Breast epithelium (tissue), 4 donors: ENCODE measurements at regions of chr2 and their contacts with region 1.

Region 1: DNA sequence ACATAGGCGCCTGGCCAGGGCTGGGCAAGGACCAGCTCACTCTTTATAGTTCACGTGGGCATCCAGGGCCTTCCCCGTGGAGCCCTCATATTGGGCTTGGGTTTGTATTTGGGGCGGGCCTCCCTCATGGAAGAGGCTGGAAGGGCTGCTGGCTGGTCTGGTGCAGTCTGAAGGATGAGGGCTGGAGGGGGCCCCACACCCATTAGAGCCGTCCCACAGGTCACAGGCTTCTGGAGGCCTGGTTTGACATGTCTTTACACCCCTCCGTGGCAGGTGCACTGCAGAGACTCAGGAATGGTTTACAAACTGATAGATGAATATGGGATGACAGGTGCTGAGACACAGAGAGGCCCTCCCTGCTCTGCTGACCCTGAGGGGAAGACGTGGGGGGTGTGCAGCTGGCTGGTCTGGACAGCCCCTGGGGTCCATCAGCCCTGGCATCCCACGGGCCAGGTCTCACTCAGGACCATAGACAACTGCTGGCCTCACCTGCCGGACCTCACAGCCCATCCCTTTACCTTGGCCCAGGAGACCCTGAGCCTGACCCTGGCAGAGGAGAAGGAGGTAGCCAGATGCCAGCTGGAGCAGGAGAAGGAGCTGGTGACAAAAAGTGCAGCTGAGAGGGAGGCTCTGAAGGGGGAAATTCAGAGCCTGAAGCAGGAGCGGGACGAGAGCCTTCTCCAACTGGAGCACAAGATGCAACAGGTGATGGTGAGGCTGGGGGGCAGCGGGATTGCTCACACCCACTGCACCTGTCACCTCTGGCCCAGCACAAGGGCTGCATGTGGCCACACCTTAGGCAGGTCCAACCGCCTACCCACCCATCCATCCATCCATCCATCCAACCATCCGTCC is 43.9 kb downstream of the CROCC2 start:
- DNase-seq: peak in 1 of 2 donors; percentile 36
- H3K4me3 ChIP-seq: no peak overlapping the region
- H3K27ac ChIP-seq: no peak overlapping the region
- H3K4me1 ChIP-seq: no peaks in the 10 kb centered on the region
- H3K27me3 ChIP-seq: no peaks in the 10 kb centered on the region
- CTCF ChIP-seq: no peak
- POLR2A ChIP-seq: no peak

Region 2: DNA sequence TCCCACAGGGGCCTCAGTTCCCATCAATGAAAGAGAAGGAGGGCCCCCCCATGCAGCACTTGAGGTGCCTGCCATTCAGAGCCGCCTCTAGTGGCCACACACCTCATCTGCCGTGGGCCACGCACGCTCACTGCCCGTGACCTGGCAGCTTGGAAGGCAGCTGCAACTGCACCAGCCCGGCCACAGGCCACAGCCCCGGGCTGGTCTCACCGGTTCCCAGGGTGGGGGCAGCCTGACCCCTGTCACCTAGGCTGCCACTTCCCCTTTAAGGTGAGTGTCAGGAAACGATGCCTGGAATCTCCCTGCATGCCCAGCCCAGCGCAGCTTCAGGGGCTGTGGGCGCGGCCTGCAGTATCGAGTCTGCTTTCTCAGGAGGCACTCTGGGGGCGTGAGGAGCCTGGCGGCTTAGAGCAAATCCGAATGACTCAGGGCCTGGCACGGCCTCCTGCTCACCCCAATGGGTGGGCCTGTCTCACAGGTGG is 56.6 kb before region 1 on chr2:
- intact Hi-C with region 1: no loop called
- DNase-seq: peak in 1 of 2 donors; percentile 47
- H3K4me3 ChIP-seq: peak overlapping the region in 1 of 3 donors; percentile 37
- H3K27ac ChIP-seq: peak overlapping the region in 1 of 2 donors; percentile 7
- H3K4me1 ChIP-seq: no peaks in the 10 kb centered on the region
- H3K27me3 ChIP-seq: no peaks in the 10 kb centered on the region
- CTCF ChIP-seq: peak in 1 of 3 donors; percentile 25
- POLR2A ChIP-seq: no peak

Region 3: GRCh38 chr2:240970816-240971215 is 20.8 kb after region 1 on chr2:
- intact Hi-C with region 1: loop called (anchors 1 kb)
- DNase-seq: no peak
- H3K4me3 ChIP-seq: no peak overlapping the region
- H3K27ac ChIP-seq: peak overlapping the region in 1 of 2 donors; percentile 14
- H3K4me1 ChIP-seq: peaks cover 0 to 7% of the 10 kb centered on the region in 2 donors
- H3K27me3 ChIP-seq: no peaks in the 10 kb centered on the region
- CTCF ChIP-seq: no peak
- POLR2A ChIP-seq: no peak